ENCODE measurements at regions of chr2 and their contacts with region 1.

Region 1: DNA sequence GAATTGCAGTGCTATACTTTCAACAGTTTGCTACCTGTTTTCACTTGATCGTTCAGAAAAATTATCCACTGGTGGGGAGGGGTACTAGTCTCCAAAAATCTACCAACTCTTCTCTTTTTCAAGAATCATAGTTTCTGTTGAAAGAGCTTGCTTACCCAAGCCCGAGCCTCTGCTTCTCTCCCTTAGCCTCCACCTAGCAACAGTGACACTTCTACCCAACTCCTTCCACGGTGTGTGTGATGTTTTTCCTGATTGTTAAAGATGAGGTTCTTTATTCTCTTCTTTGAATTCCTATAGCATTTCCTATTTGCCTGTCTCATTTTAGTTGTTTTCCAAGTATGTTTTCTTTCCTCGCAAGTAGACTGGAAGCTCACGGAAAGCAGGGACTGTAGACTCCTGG is 32.9 kb downstream of the SERPINE2 start:
- DNase-seq: no peak
- H3K4me3 ChIP-seq: no peak overlapping the region
- H3K27ac ChIP-seq: no peak overlapping the region
- H3K4me1 ChIP-seq: peaks cover 52% of the 10 kb centered on the region
- H3K27me3 ChIP-seq: no peaks in the 10 kb centered on the region
- CTCF ChIP-seq: no peak

Region 2: DNA sequence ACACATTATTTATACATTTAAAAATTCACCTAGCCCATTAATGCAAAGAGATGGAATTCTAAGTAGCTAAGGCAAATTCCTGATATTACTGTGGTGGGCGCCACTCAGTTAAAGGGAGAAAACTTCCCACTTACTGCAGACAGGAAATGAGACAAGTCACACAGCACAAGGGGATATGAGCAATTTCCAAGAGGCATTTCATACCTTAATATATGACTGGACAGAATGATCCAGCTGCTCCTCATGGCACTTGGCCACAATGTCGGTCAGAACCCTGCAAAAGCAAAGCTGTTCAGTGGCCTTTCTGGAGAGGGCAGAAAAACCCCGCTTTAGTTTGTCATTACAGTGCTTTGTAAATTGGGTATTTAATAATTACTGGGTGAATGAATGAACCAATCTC is 831.3 kb after region 1 on chr2:
- CTCF ChIA-PET with region 1: no interaction called
- POLR2A ChIA-PET with region 1: no interaction called
- intact Hi-C with region 1: no loop called
- DNase-seq: peak; percentile 28
- H3K4me3 ChIP-seq: no peak overlapping the region
- H3K27ac ChIP-seq: no peak overlapping the region
- H3K4me1 ChIP-seq: peaks cover 4% of the 10 kb centered on the region
- H3K27me3 ChIP-seq: no peaks in the 10 kb centered on the region
- CTCF ChIP-seq: no peak

Region 3: GRCh38 chr2:225464346-225465025 is 1458.3 kb after region 1 on chr2:
- CTCF ChIA-PET with region 1: no interaction called
- POLR2A ChIA-PET with region 1: interaction called, 15 read pairs
- intact Hi-C with region 1: no loop called
- DNase-seq: no peak
- H3K4me3 ChIP-seq: no peak overlapping the region
- H3K27ac ChIP-seq: no peak overlapping the region
- H3K4me1 ChIP-seq: no peaks in the 10 kb centered on the region
- H3K27me3 ChIP-seq: no peaks in the 10 kb centered on the region
- CTCF ChIP-seq: no peak